ENCODE measurements at regions of chr16 and their contacts with region 1.

Region 1: DNA sequence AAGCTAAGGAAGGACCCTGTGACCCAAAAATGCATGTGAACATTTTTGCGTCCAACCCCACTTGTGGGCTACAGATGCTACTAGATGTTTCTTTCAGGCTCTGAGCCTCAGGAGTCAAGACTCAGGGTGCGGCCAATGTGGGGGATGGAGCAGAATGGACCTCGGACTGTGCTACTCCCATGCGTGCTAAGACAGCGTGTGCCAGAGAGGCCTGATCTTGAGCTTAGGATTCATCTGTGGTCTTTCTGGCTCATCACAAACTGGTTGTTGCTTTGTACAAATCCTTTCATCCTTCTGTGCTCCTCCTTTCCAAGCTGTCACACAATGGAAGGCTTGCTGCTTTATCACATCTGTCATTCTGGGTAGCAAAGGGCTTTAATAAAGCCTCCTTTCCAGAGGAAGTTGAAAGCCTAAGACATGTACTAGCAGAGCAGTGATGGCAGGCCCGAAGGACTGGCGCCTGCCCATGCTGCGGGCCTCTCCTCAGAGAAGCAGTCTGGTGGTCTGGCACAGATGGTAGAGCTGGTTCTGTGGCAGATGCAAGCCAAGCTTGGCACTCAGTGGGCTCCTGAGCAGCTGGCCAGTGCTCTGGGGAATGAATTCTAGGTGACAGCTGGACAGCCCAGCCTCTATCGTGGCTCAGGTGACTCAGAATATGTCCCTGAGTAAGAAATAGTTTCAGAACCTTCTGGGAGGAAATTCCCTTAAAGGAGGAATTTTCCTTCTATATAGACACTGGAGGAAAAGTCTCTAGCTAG is 27.8 kb downstream of the COG4 start:
- DNase-seq: no peak
- H3K4me3 ChIP-seq: no peak overlapping the region
- H3K27ac ChIP-seq: no peak overlapping the region
- H3K4me1 ChIP-seq: no peaks in the 10 kb centered on the region
- H3K27me3 ChIP-seq: no peaks in the 10 kb centered on the region
- CTCF ChIP-seq: no peak

Region 2: GRCh38 chr16:71528863-71529262 is 1033.3 kb after region 1 on chr16:
- CTCF ChIA-PET with region 1: interaction called, 16 read pairs
- POLR2A ChIA-PET with region 1: no interaction called
- intact Hi-C with region 1: no loop called
- DNase-seq: no peak
- H3K4me3 ChIP-seq: no peak overlapping the region
- H3K27ac ChIP-seq: no peak overlapping the region
- H3K4me1 ChIP-seq: peaks cover 45% of the 10 kb centered on the region
- H3K27me3 ChIP-seq: no peaks in the 10 kb centered on the region
- CTCF ChIP-seq: no peak

Region 3: GRCh38 chr16:71807905-71808592 is 1312.4 kb after region 1 on chr16:
- CTCF ChIA-PET with region 1: no interaction called
- POLR2A ChIA-PET with region 1: no interaction called
- intact Hi-C with region 1: no loop called
- DNase-seq: no peak
- H3K4me3 ChIP-seq: peak overlapping the region; percentile 84
- H3K27ac ChIP-seq: peak overlapping the region; percentile 95
- H3K4me1 ChIP-seq: peaks cover 18% of the 10 kb centered on the region
- H3K27me3 ChIP-seq: no peaks in the 10 kb centered on the region
- CTCF ChIP-seq: no peak